CD4-positive, alpha-beta T cell (primary cell): ENCODE measurements at regions of chr12 and their contacts with region 1.

Region 1: GRCh38 chr12:54368709-54369583 is 4.7 kb upstream of the GPR84 start:
- DNase-seq: peak; percentile 85 to 95 (median 88)
- ATAC-seq: peak; percentile 97
- H3K4me3 ChIP-seq: peak overlapping the region; percentile 12
- H3K4me3 Mint-ChIP-seq: peak overlapping the region; percentile 57
- H3K27ac ChIP-seq: no peak overlapping the region
- H3K27ac Mint-ChIP-seq: no peak overlapping the region
- H3K4me1 ChIP-seq: peaks cover 35% of the 10 kb centered on the region
- H3K4me1 Mint-ChIP-seq: peaks cover 39% of the 10 kb centered on the region
- H3K27me3 ChIP-seq: no peaks in the 10 kb centered on the region
- H3K27me3 Mint-ChIP-seq: no peaks in the 10 kb centered on the region
- CTCF ChIP-seq: peak; percentile 85

Region 2: GRCh38 chr12:54005853-54006686 is 362.9 kb before region 1 on chr12:
- CTCF ChIA-PET with region 1: no interaction called
- POLR2A ChIA-PET with region 1: no interaction called
- intact Hi-C with region 1: loop called (anchors 5 to 10 kb)
- DNase-seq: peak; percentile 68 to 91 (median 81)
- ATAC-seq: peak; percentile 80
- H3K4me3 ChIP-seq: peak overlapping the region; percentile 50
- H3K4me3 Mint-ChIP-seq: peak overlapping the region; percentile 84
- H3K27ac ChIP-seq: no peak overlapping the region
- H3K27ac Mint-ChIP-seq: no peak overlapping the region
- H3K4me1 ChIP-seq: peaks cover 41% of the 10 kb centered on the region
- H3K4me1 Mint-ChIP-seq: peaks cover 38% of the 10 kb centered on the region
- H3K27me3 ChIP-seq: peaks cover 93 to 96% of the 10 kb centered on the region in 2 experiments
- H3K27me3 Mint-ChIP-seq: peaks cover 100% of the 10 kb centered on the region
- CTCF ChIP-seq: peak; percentile 93

Region 3: DNA sequence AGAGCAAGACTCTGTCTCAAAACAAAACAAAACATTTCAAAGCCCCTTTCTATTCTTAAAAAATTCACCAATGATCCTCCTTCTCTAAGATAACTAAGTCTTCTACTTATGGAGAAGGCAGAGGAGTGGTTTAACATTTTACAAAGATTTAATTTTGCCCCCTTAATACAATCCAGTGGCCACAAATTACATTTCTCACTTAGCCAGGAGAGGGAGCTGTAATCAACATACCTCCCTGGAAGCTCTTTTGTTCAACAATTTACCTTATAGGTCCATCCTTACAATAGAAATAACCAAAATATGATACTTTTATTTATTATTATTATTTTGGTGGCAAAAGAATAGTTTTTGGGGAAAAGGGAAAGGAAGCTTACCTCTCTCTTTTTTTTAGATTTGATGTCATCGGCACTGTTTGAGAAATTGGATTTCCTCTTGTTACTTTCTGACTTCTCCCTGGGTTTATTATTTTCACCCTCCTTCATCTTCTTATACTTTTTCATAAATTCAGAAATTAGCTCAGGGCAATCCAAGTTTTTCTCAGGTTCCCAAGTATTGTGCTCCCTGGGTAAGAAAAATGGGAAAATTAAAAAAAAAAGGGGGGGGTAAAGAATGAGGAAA is 117.2 kb before region 1 on chr12:
- CTCF ChIA-PET with region 1: interaction called, 13 read pairs
- POLR2A ChIA-PET with region 1: interaction called, 4 read pairs
- intact Hi-C with region 1: loop called (anchors 2 kb)
- DNase-seq: peak in 5 of 14 experiments; percentile 3 to 69 (median 58)
- ATAC-seq: peak; percentile 69
- H3K4me3 ChIP-seq: no peak overlapping the region
- H3K4me3 Mint-ChIP-seq: no peak overlapping the region
- H3K27ac ChIP-seq: no peak overlapping the region
- H3K27ac Mint-ChIP-seq: no peak overlapping the region
- H3K4me1 ChIP-seq: no peaks in the 10 kb centered on the region
- H3K4me1 Mint-ChIP-seq: peaks cover 18% of the 10 kb centered on the region
- H3K27me3 ChIP-seq: no peaks in the 10 kb centered on the region
- H3K27me3 Mint-ChIP-seq: no peaks in the 10 kb centered on the region
- CTCF ChIP-seq: peak; percentile 74

Region 4: DNA sequence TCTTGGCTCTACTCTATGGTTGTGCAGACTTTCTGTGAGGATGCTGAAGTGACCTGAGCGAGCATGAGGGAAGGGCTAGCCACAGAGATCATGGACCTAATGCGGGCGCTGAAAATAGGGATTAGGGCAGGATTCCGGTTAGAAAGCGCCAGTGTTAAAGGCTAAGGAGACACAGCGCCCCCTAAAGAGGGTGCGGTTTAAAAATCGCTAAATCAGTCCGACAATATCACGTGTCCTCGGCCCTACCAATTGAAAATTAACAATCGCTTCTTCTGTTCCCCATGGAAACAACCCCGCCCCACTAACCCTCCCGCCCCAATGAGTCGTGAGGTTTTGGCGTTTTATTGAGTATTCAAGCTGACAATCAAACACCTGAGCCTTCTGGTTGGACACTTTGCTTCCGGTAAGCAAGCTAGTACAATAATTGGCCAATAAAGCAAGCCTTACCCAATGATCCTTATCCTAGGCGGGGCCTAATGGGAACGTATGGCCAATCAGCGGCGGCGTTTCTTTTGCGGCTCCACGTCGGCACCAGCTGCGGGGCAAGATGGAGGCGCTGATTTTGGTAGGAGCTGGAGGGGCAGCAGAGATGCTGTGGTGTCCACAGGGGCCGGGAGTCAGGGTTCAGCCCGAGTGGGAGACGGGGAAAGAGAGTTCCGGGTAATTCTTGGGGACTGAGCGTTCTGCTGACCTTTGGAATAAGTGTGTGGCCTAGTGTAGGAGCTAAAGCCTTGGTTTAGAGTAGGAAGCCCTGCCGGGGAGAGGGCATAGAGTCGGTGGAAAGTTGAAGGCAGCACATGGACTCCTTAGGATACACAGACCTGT is 44.1 kb before region 1 on chr12 and contains the start of gene COPZ1:
- CTCF ChIA-PET with region 1: interaction called, 12 read pairs
- POLR2A ChIA-PET with region 1: interaction called, 5 read pairs
- intact Hi-C with region 1: no loop called
- DNase-seq: peak; percentile 84 to 99 (median 90)
- ATAC-seq: peak; percentile 94
- H3K4me3 ChIP-seq: peak within 1 kb of the TSS; percentile 76
- H3K4me3 Mint-ChIP-seq: peak within 1 kb of the TSS; percentile 92
- H3K27ac ChIP-seq: peak within 1 kb of the TSS; percentile 67 to 78
- H3K27ac Mint-ChIP-seq: peak within 1 kb of the TSS; percentile 93
- H3K4me1 ChIP-seq: peaks cover 22% of the 10 kb centered on the region
- H3K4me1 Mint-ChIP-seq: peaks cover 36% of the 10 kb centered on the region
- H3K27me3 ChIP-seq: no peaks in the 10 kb centered on the region
- H3K27me3 Mint-ChIP-seq: no peaks in the 10 kb centered on the region
- CTCF ChIP-seq: peak; percentile 88
- total RNA-seq, gene COPZ1: 31.2 to 33.9 TPM

Region 5: DNA sequence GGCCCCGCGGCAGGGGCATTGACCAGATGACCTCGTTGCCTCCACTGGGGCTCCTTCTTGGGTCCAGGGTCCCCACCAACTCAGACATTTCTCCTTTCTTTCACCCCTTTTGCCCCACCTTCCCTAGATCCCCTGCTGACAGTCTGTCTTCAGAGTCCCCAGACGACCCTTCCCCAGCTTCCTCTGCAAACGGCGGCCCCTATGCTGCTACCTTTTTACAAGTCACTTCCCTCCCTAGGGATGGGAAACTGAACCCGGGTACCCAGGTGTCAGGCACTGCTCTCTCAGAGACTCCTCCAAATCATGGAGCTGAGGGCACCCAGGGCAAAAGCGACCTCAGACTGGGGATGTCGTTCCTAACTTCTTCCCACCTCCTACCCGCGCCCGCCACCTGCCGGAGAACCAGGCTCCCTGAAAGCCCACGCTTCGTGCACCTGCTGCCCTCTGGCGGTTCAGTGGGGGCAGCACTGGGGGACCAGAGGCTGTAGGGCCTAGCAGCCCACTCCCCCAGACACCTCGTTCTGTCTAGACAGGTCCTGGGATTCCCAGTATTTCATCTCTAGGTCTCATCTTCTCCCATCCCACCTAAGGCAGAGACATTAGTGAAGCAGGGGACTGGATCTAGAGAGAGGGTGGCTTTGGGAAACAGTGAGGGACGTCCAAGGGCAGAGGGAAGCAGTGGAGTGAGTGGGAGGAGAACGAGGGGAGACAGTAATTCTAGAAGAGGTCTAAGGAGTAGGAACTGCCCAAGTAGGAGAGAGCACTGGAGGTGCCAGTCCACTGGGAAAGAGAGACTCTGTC is 10.7 kb after region 1 on chr12:
- CTCF ChIA-PET with region 1: interaction called, 18 read pairs
- POLR2A ChIA-PET with region 1: no interaction called
- intact Hi-C with region 1: no loop called
- DNase-seq: peak; percentile 82 to 93 (median 87)
- ATAC-seq: peak; percentile 99
- H3K4me3 ChIP-seq: peak overlapping the region; percentile 34
- H3K4me3 Mint-ChIP-seq: peak overlapping the region; percentile 2
- H3K27ac ChIP-seq: no peak overlapping the region
- H3K27ac Mint-ChIP-seq: no peak overlapping the region
- H3K4me1 ChIP-seq: peaks cover 7% of the 10 kb centered on the region
- H3K4me1 Mint-ChIP-seq: peaks cover 6% of the 10 kb centered on the region
- H3K27me3 ChIP-seq: no peaks in the 10 kb centered on the region
- H3K27me3 Mint-ChIP-seq: no peaks in the 10 kb centered on the region
- CTCF ChIP-seq: peak; percentile 100

Region 6: GRCh38 chr12:54390668-54391551 is 22.0 kb after region 1 on chr12:
- CTCF ChIA-PET with region 1: no interaction called
- POLR2A ChIA-PET with region 1: no interaction called
- intact Hi-C with region 1: no loop called
- DNase-seq: peak; percentile 45 to 88 (median 68)
- ATAC-seq: peak; percentile 91
- H3K4me3 ChIP-seq: peak overlapping the region; percentile 62
- H3K4me3 Mint-ChIP-seq: peak overlapping the region; percentile 89
- H3K27ac ChIP-seq: no peak overlapping the region
- H3K27ac Mint-ChIP-seq: no peak overlapping the region
- H3K4me1 ChIP-seq: peaks cover 46% of the 10 kb centered on the region
- H3K4me1 Mint-ChIP-seq: peaks cover 46% of the 10 kb centered on the region
- H3K27me3 ChIP-seq: no peaks in the 10 kb centered on the region
- H3K27me3 Mint-ChIP-seq: no peaks in the 10 kb centered on the region
- CTCF ChIP-seq: peak; percentile 33

Region 7: GRCh38 chr12:54411391-54412241 is 42.7 kb after region 1 on chr12:
- CTCF ChIA-PET with region 1: no interaction called
- POLR2A ChIA-PET with region 1: no interaction called
- intact Hi-C with region 1: no loop called
- DNase-seq: peak in 13 of 14 experiments; percentile 45 to 83 (median 68)
- ATAC-seq: peak; percentile 46
- H3K4me3 ChIP-seq: peak overlapping the region; percentile 50
- H3K4me3 Mint-ChIP-seq: peak overlapping the region; percentile 78
- H3K27ac ChIP-seq: peak overlapping the region; percentile 94 to 99
- H3K27ac Mint-ChIP-seq: peak overlapping the region; percentile 95
- H3K4me1 ChIP-seq: peaks cover 91% of the 10 kb centered on the region
- H3K4me1 Mint-ChIP-seq: peaks cover 79% of the 10 kb centered on the region
- H3K27me3 ChIP-seq: no peaks in the 10 kb centered on the region
- H3K27me3 Mint-ChIP-seq: no peaks in the 10 kb centered on the region
- CTCF ChIP-seq: no peak

Region 8: DNA sequence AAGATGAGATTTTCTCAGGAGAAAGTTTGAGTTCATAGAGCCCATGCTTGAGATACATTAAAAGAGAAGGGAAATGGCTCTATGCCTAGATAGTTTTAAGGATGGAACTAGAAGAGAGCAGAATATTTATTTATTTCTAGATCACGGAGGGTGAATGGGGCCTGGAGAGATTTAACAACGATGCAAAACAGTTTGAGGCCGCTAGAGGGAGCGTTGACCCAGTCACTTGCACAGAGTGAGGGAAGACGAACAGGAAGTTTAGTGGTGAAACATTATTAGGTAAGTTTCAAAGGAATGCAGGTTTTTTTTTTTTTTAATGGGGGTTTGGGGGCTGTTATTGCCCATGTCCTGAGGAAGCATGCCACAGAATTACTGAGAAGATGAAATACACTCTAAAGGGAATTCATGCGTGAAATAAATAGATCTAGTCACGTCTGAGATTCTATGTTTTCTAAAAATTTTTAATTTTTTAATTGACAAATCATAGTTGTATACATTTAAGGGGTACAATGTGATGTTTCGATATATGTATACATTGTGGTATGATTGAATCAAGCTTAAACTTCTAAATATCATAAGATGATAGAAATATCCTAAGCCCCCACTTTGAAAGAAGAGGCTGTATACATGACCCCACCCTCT is 234.3 kb after region 1 on chr12:
- CTCF ChIA-PET with region 1: no interaction called
- POLR2A ChIA-PET with region 1: no interaction called
- intact Hi-C with region 1: no loop called
- DNase-seq: peak; percentile 41 to 81 (median 56)
- ATAC-seq: peak; percentile 99
- H3K4me3 ChIP-seq: no peak overlapping the region
- H3K4me3 Mint-ChIP-seq: no peak overlapping the region
- H3K27ac ChIP-seq: no peak overlapping the region
- H3K27ac Mint-ChIP-seq: no peak overlapping the region
- H3K4me1 ChIP-seq: no peaks in the 10 kb centered on the region
- H3K4me1 Mint-ChIP-seq: peaks cover 8% of the 10 kb centered on the region
- H3K27me3 ChIP-seq: no peaks in the 10 kb centered on the region
- H3K27me3 Mint-ChIP-seq: peaks cover 15% of the 10 kb centered on the region
- CTCF ChIP-seq: peak; percentile 91